HepG2 (cell line): ENCODE measurements at regions of chr2 and their contacts with region 1.

Region 1: GRCh38 chr2:10477443-10478297 is 29.5 kb upstream of the ODC1 start:
- DNase-seq: no peak
- ATAC-seq: peak; percentile 34
- H3K4me3 ChIP-seq: no peak overlapping the region; a peak in 1 of 6 replicates
- H3K27ac ChIP-seq: no peak overlapping the region
- H3K4me1 ChIP-seq: peaks cover 72% of the 10 kb centered on the region
- H3K27me3 ChIP-seq: peaks cover 19 to 60% of the 10 kb centered on the region in 2 experiments; a peak in 4 of 5 replicates
- CTCF ChIP-seq: no peak
- EP300 ChIP-seq: no peak
- POLR2A ChIP-seq: no peak
- RAD21 ChIP-seq: no peak

Region 2: GRCh38 chr2:9951272-9951972 is 526.2 kb before region 1 on chr2 and contains the start of gene GRHL1:
- CTCF ChIA-PET with region 1: no interaction called
- POLR2A ChIA-PET with region 1: no interaction called
- in situ Hi-C with region 1: no loop called
- intact Hi-C with region 1: no loop called
- DNase-seq: peak; percentile 85
- ATAC-seq: peak; percentile 86
- H3K4me3 ChIP-seq: peak within 1 kb of the TSS; percentile 83 to 94 (median 84)
- H3K27ac ChIP-seq: peak within 1 kb of the TSS; percentile 76
- H3K4me1 ChIP-seq: peaks cover 69% of the 10 kb centered on the region
- H3K27me3 ChIP-seq: peaks cover 0 to 9% of the 10 kb centered on the region in 2 experiments; a peak in 1 of 5 replicates
- CTCF ChIP-seq: no peak
- EP300 ChIP-seq: no peak
- POLR2A ChIP-seq: 0 out of 4 replicates have a peak, but pooled peaks of 1 of the 2 experiments have one; percentile 46
- RAD21 ChIP-seq: peak; percentile 56
- total RNA-seq, gene GRHL1: 10.6 and 12.0 TPM in 2 replicates

Region 3: GRCh38 chr2:10448208-10448645 is 29.4 kb before region 1 on chr2 and contains the start of gene ODC1:
- CTCF ChIA-PET with region 1: no interaction called
- POLR2A ChIA-PET with region 1: interaction called, 13 read pairs
- in situ Hi-C with region 1: no loop called
- intact Hi-C with region 1: no loop called
- DNase-seq: peak; percentile 88
- ATAC-seq: peak; percentile 62
- H3K4me3 ChIP-seq: peak within 1 kb of the TSS; percentile 58 to 75 (median 70)
- H3K27ac ChIP-seq: peak within 1 kb of the TSS; percentile 90
- H3K4me1 ChIP-seq: peaks cover 67% of the 10 kb centered on the region
- H3K27me3 ChIP-seq: no peaks in the 10 kb centered on the region
- CTCF ChIP-seq: no peak
- EP300 ChIP-seq: no peak
- POLR2A ChIP-seq: no peak; a peak in 1 of 4 replicates
- RAD21 ChIP-seq: peak; percentile 49; the same call in 1 of the 2 replicates
- total RNA-seq, gene ODC1: 371 and 422 TPM in 2 replicates

Region 4: GRCh38 chr2:10460366-10460796 is 17.3 kb before region 1 on chr2:
- CTCF ChIA-PET with region 1: no interaction called
- POLR2A ChIA-PET with region 1: no interaction called
- in situ Hi-C with region 1: no loop called
- intact Hi-C with region 1: loop called (anchors 2 kb)
- DNase-seq: no peak
- ATAC-seq: peak; percentile 74
- H3K4me3 ChIP-seq: no peak overlapping the region
- H3K27ac ChIP-seq: no peak overlapping the region
- H3K4me1 ChIP-seq: peaks cover 13% of the 10 kb centered on the region
- H3K27me3 ChIP-seq: peaks cover 3 to 31% of the 10 kb centered on the region in 2 experiments; a peak in 4 of 5 replicates
- CTCF ChIP-seq: peak; percentile 46
- EP300 ChIP-seq: no peak
- POLR2A ChIP-seq: no peak
- RAD21 ChIP-seq: no peak

Region 5: GRCh38 chr2:10733575-10733943 is 255.9 kb after region 1 on chr2:
- CTCF ChIA-PET with region 1: no interaction called
- POLR2A ChIA-PET with region 1: no interaction called
- in situ Hi-C with region 1: no loop called
- intact Hi-C with region 1: no loop called
- DNase-seq: no peak
- ATAC-seq: peak; percentile 17; the same call in 1 of the 3 replicates
- H3K4me3 ChIP-seq: no peak overlapping the region
- H3K27ac ChIP-seq: no peak overlapping the region
- H3K4me1 ChIP-seq: peaks cover 14% of the 10 kb centered on the region
- H3K27me3 ChIP-seq: peaks cover 0 to 31% of the 10 kb centered on the region in 2 experiments; a peak in 2 of 5 replicates
- CTCF ChIP-seq: no peak
- EP300 ChIP-seq: no peak
- POLR2A ChIP-seq: no peak
- RAD21 ChIP-seq: no peak